ENCODE measurements at regions of chr3 and their contacts with region 1.

Region 1: DNA sequence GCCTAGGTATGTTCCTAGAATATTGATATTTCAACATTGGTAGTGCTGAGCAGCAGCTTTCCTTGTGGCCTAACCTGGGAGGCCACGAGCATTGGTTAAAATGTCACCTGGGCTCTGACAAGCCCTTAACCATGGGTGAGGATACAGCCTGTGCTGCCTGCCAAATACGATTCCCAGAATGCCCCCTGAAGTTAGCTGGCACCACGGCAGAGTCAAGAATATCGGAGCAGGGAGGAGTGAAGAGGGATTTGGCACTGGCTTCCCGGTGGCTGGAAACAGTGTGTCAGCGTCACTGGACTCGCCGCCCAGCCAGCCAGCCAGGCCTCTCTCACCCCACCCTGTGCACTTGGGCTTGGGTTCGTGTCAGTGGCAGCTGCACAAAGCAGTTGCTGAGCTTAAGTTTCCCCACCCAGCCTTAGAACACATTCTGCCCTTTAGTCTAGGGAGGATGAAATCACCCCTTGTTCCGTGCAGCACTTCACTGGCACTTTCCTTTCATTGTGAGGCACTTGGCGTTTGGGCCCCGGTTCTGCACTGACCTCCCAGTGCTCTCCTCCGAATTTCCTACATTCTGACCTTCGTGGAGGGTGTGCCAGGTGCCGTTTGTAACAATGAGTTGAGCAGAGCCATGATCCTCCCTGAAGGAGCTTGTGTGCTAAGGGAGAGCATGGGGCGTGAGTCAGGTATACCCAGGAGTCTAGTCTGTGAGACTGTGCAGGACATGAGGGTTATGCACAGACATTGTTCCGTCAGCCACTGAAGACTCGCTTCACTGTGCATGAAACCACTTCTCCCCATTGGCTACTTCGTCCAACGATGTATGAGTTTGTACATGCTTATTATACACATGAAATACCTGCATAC is 152.8 kb upstream of the BHLHE40 start:
- DNase-seq: no peak
- H3K4me3 ChIP-seq: peak overlapping the region; percentile 4 to 39
- H3K4me3 Mint-ChIP-seq: peak overlapping the region; percentile 74 to 94 (median 88)
- H3K27ac ChIP-seq: peak overlapping the region; percentile 33
- H3K27ac Mint-ChIP-seq: peak overlapping the region; percentile 88 to 98 (median 96)
- H3K4me1 ChIP-seq: peaks cover 99% of the 10 kb centered on the region
- H3K4me1 Mint-ChIP-seq: peaks cover 77 to 97% (median 93%) of the 10 kb centered on the region in 4 donors
- H3K27me3 ChIP-seq: no peaks in the 10 kb centered on the region
- H3K27me3 Mint-ChIP-seq: peaks cover 0 to 3% of the 10 kb centered on the region in 2 donors

Region 2: GRCh38 chr3:4722103-4722502 is 104.4 kb before region 1 on chr3:
- CTCF ChIA-PET with region 1: interaction called, 10 read pairs
- POLR2A ChIA-PET with region 1: no interaction called
- intact Hi-C with region 1: no loop called
- DNase-seq: peak in 4 of 5 donors; percentile 23 to 47 (median 28)
- H3K4me3 ChIP-seq: no peak overlapping the region
- H3K4me3 Mint-ChIP-seq: no peak overlapping the region
- H3K27ac ChIP-seq: no peak overlapping the region
- H3K27ac Mint-ChIP-seq: peak overlapping the region in 5 of 7 donors; percentile 39 to 86 (median 65)
- H3K4me1 ChIP-seq: peaks cover 12% of the 10 kb centered on the region
- H3K4me1 Mint-ChIP-seq: peaks cover 16 to 23% (median 18%) of the 10 kb centered on the region in 4 donors
- H3K27me3 ChIP-seq: no peaks in the 10 kb centered on the region
- H3K27me3 Mint-ChIP-seq: no peaks in the 10 kb centered on the region

Region 3: DNA sequence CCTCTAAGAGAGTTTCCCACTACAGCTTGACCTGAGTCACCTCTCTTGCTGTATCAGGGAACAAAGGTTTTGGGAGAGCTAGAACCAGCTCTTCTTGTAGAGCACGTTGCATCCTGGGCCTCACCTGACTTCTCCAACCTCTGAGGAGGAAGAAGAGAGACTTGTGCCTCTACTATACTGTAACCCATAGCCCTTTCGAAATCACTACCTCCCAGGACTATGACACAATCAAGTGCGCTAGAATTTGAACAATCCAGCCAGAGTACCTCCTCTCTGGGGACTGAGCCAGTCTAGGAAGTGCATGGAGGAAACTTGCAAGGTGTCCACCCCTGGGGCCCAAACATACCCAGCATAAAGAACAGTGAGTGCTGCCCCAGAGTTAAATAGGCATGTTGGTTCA is 40.0 kb before region 1 on chr3:
- CTCF ChIA-PET with region 1: no interaction called
- POLR2A ChIA-PET with region 1: no interaction called
- intact Hi-C with region 1: no loop called
- DNase-seq: no peak
- H3K4me3 ChIP-seq: no peak overlapping the region
- H3K4me3 Mint-ChIP-seq: no peak overlapping the region
- H3K27ac ChIP-seq: no peak overlapping the region
- H3K27ac Mint-ChIP-seq: peak overlapping the region in 2 of 7 donors; percentile 10 to 14
- H3K4me1 ChIP-seq: no peaks in the 10 kb centered on the region
- H3K4me1 Mint-ChIP-seq: no peaks in the 10 kb centered on the region
- H3K27me3 ChIP-seq: no peaks in the 10 kb centered on the region
- H3K27me3 Mint-ChIP-seq: no peaks in the 10 kb centered on the region

Region 4: GRCh38 chr3:4888913-4889846 is 62.7 kb after region 1 on chr3:
- CTCF ChIA-PET with region 1: interaction called, 6 read pairs
- POLR2A ChIA-PET with region 1: interaction called, 4 read pairs
- intact Hi-C with region 1: loop called (anchors 1 kb)
- DNase-seq: peak in 4 of 5 donors; percentile 39 to 61 (median 50)
- H3K4me3 ChIP-seq: no peak overlapping the region
- H3K4me3 Mint-ChIP-seq: peak overlapping the region in 6 of 8 donors; percentile 7 to 65 (median 43)
- H3K27ac ChIP-seq: no peak overlapping the region
- H3K27ac Mint-ChIP-seq: peak overlapping the region; percentile 53 to 90 (median 74)
- H3K4me1 ChIP-seq: peaks cover 21% of the 10 kb centered on the region
- H3K4me1 Mint-ChIP-seq: peaks cover 15 to 20% (median 19%) of the 10 kb centered on the region in 4 donors
- H3K27me3 ChIP-seq: no peaks in the 10 kb centered on the region
- H3K27me3 Mint-ChIP-seq: no peaks in the 10 kb centered on the region

Region 5: GRCh38 chr3:4986782-4987537 is 160.5 kb after region 1 on chr3:
- CTCF ChIA-PET with region 1: interaction called, 26 read pairs
- POLR2A ChIA-PET with region 1: interaction called, 254 read pairs
- intact Hi-C with region 1: no loop called
- DNase-seq: peak; percentile 62 to 79 (median 70)
- H3K4me3 ChIP-seq: peak overlapping the region; percentile 44 to 65
- H3K4me3 Mint-ChIP-seq: peak overlapping the region; percentile 86 to 93 (median 90)
- H3K27ac ChIP-seq: peak overlapping the region; percentile 59
- H3K27ac Mint-ChIP-seq: peak overlapping the region; percentile 95 to 98 (median 97)
- H3K4me1 ChIP-seq: peaks cover 58% of the 10 kb centered on the region
- H3K4me1 Mint-ChIP-seq: peaks cover 34 to 50% (median 43%) of the 10 kb centered on the region in 4 donors
- H3K27me3 ChIP-seq: no peaks in the 10 kb centered on the region
- H3K27me3 Mint-ChIP-seq: no peaks in the 10 kb centered on the region

Region 6: GRCh38 chr3:5026331-5027218 is 200.1 kb after region 1 on chr3:
- CTCF ChIA-PET with region 1: interaction called, 11 read pairs
- POLR2A ChIA-PET with region 1: interaction called, 11 read pairs
- intact Hi-C with region 1: loop called (anchors 1 kb)
- DNase-seq: peak; percentile 54 to 77 (median 57)
- H3K4me3 ChIP-seq: peak overlapping the region in 1 of 2 donors; percentile 71
- H3K4me3 Mint-ChIP-seq: peak overlapping the region; percentile 85 to 93 (median 87)
- H3K27ac ChIP-seq: peak overlapping the region; percentile 50
- H3K27ac Mint-ChIP-seq: peak overlapping the region; percentile 81 to 97 (median 93)
- H3K4me1 ChIP-seq: peaks cover 13% of the 10 kb centered on the region
- H3K4me1 Mint-ChIP-seq: peaks cover 15 to 35% (median 23%) of the 10 kb centered on the region in 4 donors
- H3K27me3 ChIP-seq: no peaks in the 10 kb centered on the region
- H3K27me3 Mint-ChIP-seq: no peaks in the 10 kb centered on the region